CD8-positive, alpha-beta memory T cell (primary cell): ENCODE measurements at regions of chr16 and their contacts with region 1.

Region 1: DNA sequence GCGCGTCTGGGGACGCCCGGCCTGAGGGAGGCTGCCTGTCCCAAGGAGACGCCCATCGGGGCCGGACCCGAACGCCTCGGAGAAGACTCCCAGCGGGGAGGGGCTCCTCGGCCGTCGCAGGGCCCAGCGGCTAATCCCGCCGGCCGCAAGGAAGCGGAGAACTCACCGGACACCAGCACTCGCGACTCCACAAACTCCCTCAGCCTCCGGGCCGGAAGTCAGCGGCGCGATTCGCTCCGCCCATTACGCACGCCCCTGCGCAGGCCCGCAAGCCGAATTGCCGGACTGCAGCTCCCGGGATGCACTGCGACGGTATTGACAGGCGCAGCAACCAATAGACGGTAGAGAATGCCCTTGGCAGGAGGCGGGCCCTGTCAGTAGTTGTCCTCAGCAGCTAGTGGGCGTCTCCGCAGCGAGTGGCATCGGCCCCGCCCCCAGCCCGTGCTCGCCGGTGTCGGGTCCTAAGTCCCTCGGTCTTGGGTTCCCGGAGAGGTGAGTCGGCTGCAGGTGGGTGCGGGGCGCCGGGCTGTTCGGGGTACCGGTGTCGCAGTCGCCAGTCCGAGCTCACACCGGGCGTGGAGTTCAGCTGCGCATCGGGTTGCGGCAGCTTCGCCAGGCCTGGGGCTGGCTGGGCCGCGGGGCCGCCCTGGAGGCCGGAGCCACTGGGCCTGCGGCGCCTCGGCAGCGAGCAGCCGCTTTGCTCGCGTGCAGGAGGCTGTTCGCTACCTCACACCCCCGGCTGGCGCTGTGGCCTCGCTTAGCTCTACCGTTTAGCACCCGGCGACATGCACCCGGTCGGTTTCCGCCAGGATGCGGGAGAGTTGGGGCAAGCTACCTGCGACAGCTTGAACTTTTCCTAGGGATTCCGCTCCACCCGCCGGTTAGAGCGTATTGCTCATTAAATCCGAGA is at the starts of genes ZNF174 and ZSCAN32:
- DNase-seq: peak; percentile 97 to 99 (median 99)
- H3K4me3 ChIP-seq: peak within 1 kb of the TSS; percentile 92
- H3K4me3 Mint-ChIP-seq: peak within 1 kb of the TSS; percentile 89 to 98 (median 92)
- H3K27ac ChIP-seq: peak within 1 kb of the TSS; percentile 76
- H3K27ac Mint-ChIP-seq: peak within 1 kb of the TSS; percentile 85 to 93 (median 90)
- H3K4me1 ChIP-seq: peaks cover 26% of the 10 kb centered on the region
- H3K4me1 Mint-ChIP-seq: peaks cover 54 to 79% (median 62%) of the 10 kb centered on the region in 3 donors
- H3K27me3 ChIP-seq: no peaks in the 10 kb centered on the region
- H3K27me3 Mint-ChIP-seq: no peaks in the 10 kb centered on the region
- total RNA-seq, gene ZNF174: 11.4 to 12.3 TPM
- total RNA-seq, gene ZSCAN32: 13.5 to 15.6 TPM

Region 2: GRCh38 chr16:3282730-3283524 is 118.1 kb before region 1 on chr16 and contains the start of gene ZNF263:
- CTCF ChIA-PET with region 1: interaction called, 7 read pairs
- POLR2A ChIA-PET with region 1: interaction called, 18 read pairs
- DNase-seq: peak; percentile 87 to 95 (median 94)
- H3K4me3 ChIP-seq: peak within 1 kb of the TSS; percentile 91
- H3K4me3 Mint-ChIP-seq: peak within 1 kb of the TSS; percentile 88 to 97 (median 96)
- H3K27ac ChIP-seq: peak within 1 kb of the TSS; percentile 95
- H3K27ac Mint-ChIP-seq: peak within 1 kb of the TSS; percentile 84 to 99 (median 96)
- H3K4me1 ChIP-seq: peaks cover 25% of the 10 kb centered on the region
- H3K4me1 Mint-ChIP-seq: peaks cover 35 to 48% (median 41%) of the 10 kb centered on the region in 3 donors
- H3K27me3 ChIP-seq: no peaks in the 10 kb centered on the region
- H3K27me3 Mint-ChIP-seq: peaks cover 0 to 4% of the 10 kb centered on the region in 2 donors
- total RNA-seq, gene ZNF263: 29.2 to 35.1 TPM

Region 3: DNA sequence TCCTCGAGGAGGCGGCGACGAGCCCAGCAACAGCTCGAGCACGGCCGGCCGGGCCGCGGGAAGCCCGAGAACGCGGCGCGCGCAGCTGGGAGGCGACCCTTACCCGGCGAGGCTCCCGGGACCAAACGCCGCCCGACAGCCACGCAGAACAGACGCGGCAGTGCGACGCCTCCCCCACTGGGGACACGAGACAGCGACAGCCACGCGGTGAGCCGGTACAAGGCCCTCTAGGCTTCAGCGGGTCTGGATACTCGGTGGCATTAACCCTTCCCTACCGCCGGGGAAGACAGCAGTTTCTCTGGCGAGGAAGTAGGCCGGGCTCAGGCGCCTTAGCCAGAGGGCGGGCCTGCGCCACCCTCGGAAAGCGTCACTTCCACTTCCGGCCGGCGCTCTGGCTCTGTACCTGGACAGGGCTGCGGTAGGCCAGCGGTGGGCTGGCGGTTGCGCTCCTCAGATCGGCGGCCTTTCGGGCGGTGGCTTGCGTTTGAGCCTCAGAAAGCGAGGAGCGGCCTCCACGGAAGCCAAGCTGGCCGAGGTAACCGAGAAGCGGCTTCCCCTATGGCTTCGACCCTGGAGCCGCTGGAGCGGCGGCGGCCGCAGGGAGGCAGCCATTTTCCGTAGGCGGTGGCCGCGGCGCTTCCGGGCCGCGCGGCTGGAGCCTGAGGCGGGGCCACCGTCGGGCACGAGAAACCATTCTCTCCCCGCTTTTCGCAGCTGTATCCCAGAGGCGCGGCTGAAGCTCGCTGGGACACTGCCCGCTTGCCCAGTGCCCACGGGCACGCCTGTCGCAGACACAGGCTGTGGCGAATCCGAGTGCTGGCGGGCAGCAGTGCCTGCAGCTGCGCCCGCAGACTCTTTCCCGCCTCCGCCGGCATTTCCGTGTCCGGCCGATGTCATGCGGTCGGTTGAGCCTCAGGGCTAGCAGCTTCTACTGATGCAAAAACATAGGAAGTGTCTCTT is 95.6 kb before region 1 on chr16 and contains the starts of genes TIGD7 and ZNF75A:
- CTCF ChIA-PET with region 1: interaction called, 6 read pairs
- POLR2A ChIA-PET with region 1: interaction called, 14 read pairs
- DNase-seq: peak; percentile 68 to 90 (median 83)
- H3K4me3 ChIP-seq: peak within 1 kb of the TSS; percentile 72
- H3K4me3 Mint-ChIP-seq: peak within 1 kb of the TSS; percentile 79 to 93 (median 85)
- H3K27ac ChIP-seq: peak within 1 kb of the TSS; percentile 82
- H3K27ac Mint-ChIP-seq: peak within 1 kb of the TSS; percentile 63 to 90 (median 86)
- H3K4me1 ChIP-seq: peaks cover 18% of the 10 kb centered on the region
- H3K4me1 Mint-ChIP-seq: peaks cover 16 to 38% (median 24%) of the 10 kb centered on the region in 3 donors
- H3K27me3 ChIP-seq: no peaks in the 10 kb centered on the region
- H3K27me3 Mint-ChIP-seq: no peaks in the 10 kb centered on the region
- total RNA-seq, gene TIGD7: 5.1 to 5.2 TPM
- total RNA-seq, gene ZNF75A: 37.9 to 42.0 TPM

Region 4: DNA sequence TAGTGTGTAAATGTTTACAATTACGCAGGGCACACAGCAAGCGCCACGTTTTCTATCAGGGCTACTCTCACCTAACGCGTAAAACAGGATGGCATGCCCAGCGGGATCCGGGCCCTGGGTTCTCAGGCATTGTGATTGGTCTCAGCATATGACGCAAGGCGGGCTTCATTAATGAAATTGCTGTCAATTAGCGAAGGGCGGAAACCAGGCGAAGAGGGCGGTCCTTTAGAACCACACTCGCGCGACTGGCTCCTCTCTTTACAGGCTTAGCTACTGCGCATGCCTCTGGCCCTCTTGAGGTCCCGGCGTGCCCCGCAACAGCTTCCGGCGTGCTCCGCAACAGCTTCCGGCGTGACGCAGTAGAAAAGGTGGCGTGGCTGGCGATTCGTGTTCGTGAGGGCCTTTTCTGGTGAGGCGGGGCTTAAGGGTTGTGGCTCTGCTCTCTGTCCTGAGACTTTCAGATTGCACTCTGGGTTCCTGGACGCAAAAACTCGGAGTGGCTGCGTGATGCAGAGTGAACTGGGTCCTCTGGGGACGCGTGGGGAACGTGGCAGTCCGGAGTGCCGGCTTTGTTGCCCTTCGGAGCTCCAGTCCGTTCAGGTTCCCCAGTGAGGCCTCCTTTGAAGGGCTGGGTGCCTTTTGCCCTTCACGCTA is 36.1 kb before region 1 on chr16:
- CTCF ChIA-PET with region 1: no interaction called
- POLR2A ChIA-PET with region 1: interaction called, 13 read pairs
- DNase-seq: peak; percentile 61 to 92 (median 83)
- H3K4me3 ChIP-seq: peak overlapping the region; percentile 62
- H3K4me3 Mint-ChIP-seq: peak overlapping the region; percentile 74 to 93 (median 82)
- H3K27ac ChIP-seq: peak overlapping the region; percentile 64
- H3K27ac Mint-ChIP-seq: peak overlapping the region; percentile 66 to 92 (median 88)
- H3K4me1 ChIP-seq: peaks cover 3% of the 10 kb centered on the region
- H3K4me1 Mint-ChIP-seq: peaks cover 10 to 14% (median 13%) of the 10 kb centered on the region in 3 donors
- H3K27me3 ChIP-seq: no peaks in the 10 kb centered on the region
- H3K27me3 Mint-ChIP-seq: peaks cover 16 to 27% of the 10 kb centered on the region in 2 donors

Region 5: GRCh38 chr16:3413730-3414379 is 12.8 kb after region 1 on chr16:
- CTCF ChIA-PET with region 1: interaction called, 7 read pairs
- POLR2A ChIA-PET with region 1: interaction called, 11 read pairs
- DNase-seq: no peak
- H3K4me3 ChIP-seq: no peak overlapping the region
- H3K4me3 Mint-ChIP-seq: no peak overlapping the region
- H3K27ac ChIP-seq: no peak overlapping the region
- H3K27ac Mint-ChIP-seq: no peak overlapping the region
- H3K4me1 ChIP-seq: no peaks in the 10 kb centered on the region
- H3K4me1 Mint-ChIP-seq: no peaks in the 10 kb centered on the region
- H3K27me3 ChIP-seq: no peaks in the 10 kb centered on the region
- H3K27me3 Mint-ChIP-seq: peaks cover 0 to 2% of the 10 kb centered on the region in 2 donors

Region 6: DNA sequence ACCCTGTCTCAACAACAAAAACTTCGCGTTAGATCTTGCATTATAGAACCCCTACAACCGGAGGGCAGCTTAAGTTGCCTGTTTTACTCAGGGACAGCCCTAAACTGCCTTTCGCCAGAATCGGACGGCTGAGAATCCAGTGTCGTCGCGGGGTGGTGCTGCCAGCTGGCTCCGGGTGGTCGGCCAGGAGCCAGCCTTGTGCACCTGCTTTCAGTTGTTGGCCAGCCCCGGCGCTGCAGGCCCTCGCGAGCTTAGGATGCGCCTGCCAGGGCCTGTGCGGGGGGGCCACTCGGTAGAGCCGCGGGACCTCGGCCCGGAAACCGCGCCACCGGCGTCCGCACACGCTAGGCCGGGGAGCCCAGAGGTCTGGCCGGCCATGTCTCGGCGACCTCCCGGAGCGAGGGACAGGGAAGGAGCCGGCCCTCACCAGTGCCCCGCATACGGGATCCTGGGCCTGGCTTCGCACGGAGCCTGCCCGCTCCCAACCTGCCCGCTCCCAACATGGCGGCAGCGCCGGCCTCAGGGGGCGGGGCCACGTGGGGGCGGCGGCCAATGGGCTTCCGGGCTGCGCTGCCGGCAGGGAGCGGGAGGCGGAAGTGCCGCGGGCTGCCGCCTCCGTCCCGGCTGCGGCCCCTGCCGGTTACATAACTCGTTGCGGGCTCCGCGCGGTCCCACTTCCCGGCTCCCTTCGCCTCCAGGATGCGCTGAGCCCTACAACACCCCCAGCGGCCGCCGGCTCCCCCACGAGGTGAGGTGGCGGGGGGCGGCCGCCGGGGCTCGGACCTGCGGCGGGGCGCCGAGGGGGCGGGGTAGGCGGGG is 56.6 kb after region 1 on chr16:
- CTCF ChIA-PET with region 1: interaction called, 5 read pairs
- POLR2A ChIA-PET with region 1: interaction called, 10 read pairs
- DNase-seq: peak; percentile 87 to 94 (median 92)
- H3K4me3 ChIP-seq: peak overlapping the region; percentile 89
- H3K4me3 Mint-ChIP-seq: peak overlapping the region; percentile 74 to 89 (median 84)
- H3K27ac ChIP-seq: peak overlapping the region; percentile 78
- H3K27ac Mint-ChIP-seq: peak overlapping the region; percentile 88 to 94 (median 92)
- H3K4me1 ChIP-seq: peaks cover 40% of the 10 kb centered on the region
- H3K4me1 Mint-ChIP-seq: peaks cover 45 to 55% (median 49%) of the 10 kb centered on the region in 3 donors
- H3K27me3 ChIP-seq: no peaks in the 10 kb centered on the region
- H3K27me3 Mint-ChIP-seq: no peaks in the 10 kb centered on the region